ENCODE measurements at regions of chr2 and their contacts with region 1.

Region 1: DNA sequence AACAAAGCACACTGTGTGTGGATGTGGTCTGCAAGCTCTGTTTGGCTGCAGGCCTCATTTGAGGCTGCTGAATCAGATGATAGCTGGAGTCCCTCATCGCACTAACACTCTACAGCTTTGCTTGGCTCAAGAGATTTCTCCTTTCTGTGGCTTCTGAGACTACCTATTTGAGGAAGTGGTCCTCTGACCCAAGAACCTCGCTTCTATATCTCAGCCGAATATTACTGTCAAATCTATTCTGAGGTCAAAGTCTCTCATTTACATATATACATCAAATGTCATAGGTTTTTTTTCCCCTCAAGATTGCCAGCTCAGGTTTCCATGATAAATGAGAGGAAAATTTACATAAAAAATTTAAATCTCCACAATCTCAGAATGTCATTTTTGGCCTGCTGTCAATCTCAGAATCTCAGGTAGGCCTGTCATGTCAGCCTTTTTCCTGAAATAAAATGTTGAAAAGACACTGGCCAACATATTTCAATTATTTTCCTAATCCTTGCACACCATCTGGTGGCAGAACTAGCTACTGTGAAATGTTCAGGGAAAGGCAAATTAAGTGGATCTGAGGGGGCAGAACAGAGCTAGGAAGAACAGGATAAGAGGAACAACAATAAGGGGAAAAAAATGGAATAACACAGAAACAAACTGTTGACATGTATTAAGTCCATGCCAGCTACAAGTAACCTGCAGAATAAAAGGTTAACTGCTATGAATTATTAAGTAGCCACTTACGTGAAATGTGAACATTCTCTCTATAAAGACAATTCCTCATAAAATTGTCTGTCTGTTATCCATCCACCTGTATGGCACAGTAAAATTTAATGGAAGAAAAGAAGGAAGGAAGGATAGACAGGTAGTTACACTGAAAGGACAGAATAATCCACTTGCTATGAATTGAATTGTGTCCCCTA is 39.3 kb downstream of the AP1S3 start:
- DNase-seq: peak; percentile 59
- ATAC-seq: peak; percentile 73
- H3K4me3 ChIP-seq: no peak overlapping the region
- H3K27ac ChIP-seq: no peak overlapping the region
- H3K4me1 ChIP-seq: peaks cover 8% of the 10 kb centered on the region
- H3K27me3 ChIP-seq: no peaks in the 10 kb centered on the region
- CTCF ChIP-seq: peak; percentile 83
- POLR2A ChIP-seq: no peak
- RAD21 ChIP-seq: peak; percentile 85

Region 2: DNA sequence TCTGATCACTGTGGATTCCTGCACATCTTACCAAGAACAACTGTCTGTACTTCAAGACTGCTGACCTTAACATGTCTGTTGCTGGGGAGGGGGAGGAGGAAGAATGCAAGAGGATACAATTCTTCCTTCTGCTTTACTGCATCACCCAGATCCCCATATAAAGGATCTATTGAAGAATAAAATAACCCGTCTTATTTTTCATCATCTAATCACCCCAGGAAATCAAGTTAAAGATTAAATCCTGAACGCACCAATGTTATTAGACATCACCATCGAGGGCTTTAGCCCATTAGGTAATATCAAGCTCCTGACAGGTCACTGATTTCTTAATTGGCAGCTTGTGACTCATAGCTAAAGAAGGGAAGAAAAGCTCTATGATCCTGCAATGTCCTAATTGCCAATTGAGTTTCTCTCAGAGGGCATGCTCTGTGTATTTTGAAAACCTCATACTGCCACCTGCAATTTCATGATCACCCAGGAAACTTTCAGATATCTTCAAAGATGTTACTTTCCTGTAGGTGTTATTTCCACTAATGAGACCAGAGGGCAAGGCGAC is 821.5 kb before region 1 on chr2:
- CTCF ChIA-PET with region 1: interaction called, 7 read pairs
- POLR2A ChIA-PET with region 1: no interaction called
- dilution Hi-C with region 1: no loop called
- in situ Hi-C with region 1: loop called (anchors 10 kb)
- intact Hi-C with region 1: loop called (anchors 2 kb)
- DNase-seq: no peak
- ATAC-seq: no peak
- H3K4me3 ChIP-seq: no peak overlapping the region
- H3K27ac ChIP-seq: no peak overlapping the region
- H3K4me1 ChIP-seq: peaks cover 3% of the 10 kb centered on the region; the same call in 1 of the 2 replicates
- H3K27me3 ChIP-seq: no peaks in the 10 kb centered on the region
- CTCF ChIP-seq: no peak
- POLR2A ChIP-seq: no peak
- RAD21 ChIP-seq: no peak

Region 3: GRCh38 chr2:223247136-223247535 is 550.9 kb before region 1 on chr2:
- CTCF ChIA-PET with region 1: interaction called, 5 read pairs
- POLR2A ChIA-PET with region 1: no interaction called
- dilution Hi-C with region 1: no loop called
- in situ Hi-C with region 1: no loop called
- intact Hi-C with region 1: loop called (anchors 1 kb)
- DNase-seq: peak; percentile 43
- ATAC-seq: peak; percentile 77
- H3K4me3 ChIP-seq: no peak overlapping the region
- H3K27ac ChIP-seq: no peak overlapping the region
- H3K4me1 ChIP-seq: no peaks in the 10 kb centered on the region
- H3K27me3 ChIP-seq: no peaks in the 10 kb centered on the region
- CTCF ChIP-seq: peak; percentile 63
- POLR2A ChIP-seq: no peak
- RAD21 ChIP-seq: peak; percentile 68

Region 4: GRCh38 chr2:223459328-223459939 is 338.6 kb before region 1 on chr2:
- CTCF ChIA-PET with region 1: no interaction called
- POLR2A ChIA-PET with region 1: no interaction called
- dilution Hi-C with region 1: no loop called
- in situ Hi-C with region 1: no loop called
- intact Hi-C with region 1: loop called (anchors 1 kb)
- DNase-seq: peak; percentile 44
- ATAC-seq: no peak
- H3K4me3 ChIP-seq: no peak overlapping the region
- H3K27ac ChIP-seq: no peak overlapping the region
- H3K4me1 ChIP-seq: peaks cover 3% of the 10 kb centered on the region
- H3K27me3 ChIP-seq: no peaks in the 10 kb centered on the region
- CTCF ChIP-seq: peak; percentile 53
- POLR2A ChIP-seq: no peak
- RAD21 ChIP-seq: peak; percentile 43

Region 5: GRCh38 chr2:223674998-223675609 is 123.0 kb before region 1 on chr2:
- CTCF ChIA-PET with region 1: interaction called, 7 read pairs
- POLR2A ChIA-PET with region 1: no interaction called
- dilution Hi-C with region 1: no loop called
- in situ Hi-C with region 1: no loop called
- intact Hi-C with region 1: loop called (anchors 1 kb)
- DNase-seq: peak; percentile 54
- ATAC-seq: peak; percentile 80
- H3K4me3 ChIP-seq: no peak overlapping the region
- H3K27ac ChIP-seq: no peak overlapping the region
- H3K4me1 ChIP-seq: no peaks in the 10 kb centered on the region
- H3K27me3 ChIP-seq: no peaks in the 10 kb centered on the region
- CTCF ChIP-seq: peak; percentile 71
- POLR2A ChIP-seq: no peak
- RAD21 ChIP-seq: peak; percentile 63

Region 6: DNA sequence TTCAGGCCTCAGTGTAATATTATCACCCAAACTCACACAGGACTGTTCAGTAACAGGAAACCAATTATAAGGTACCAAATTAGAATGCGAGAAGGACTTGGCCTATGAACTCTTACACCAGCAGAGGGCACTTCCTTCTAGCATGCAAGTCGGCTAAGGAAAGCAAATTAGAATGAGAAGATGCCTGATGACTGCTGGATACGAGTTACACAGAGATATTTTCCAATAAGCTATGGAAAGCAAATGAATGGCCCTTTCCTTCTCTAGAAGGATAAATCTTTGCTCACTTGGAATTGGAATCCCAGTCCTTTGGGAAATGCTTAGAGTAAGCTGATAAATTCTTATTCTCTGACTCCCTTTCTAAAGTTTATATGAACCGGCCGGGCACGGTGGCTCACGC is 70.5 kb before region 1 on chr2:
- CTCF ChIA-PET with region 1: no interaction called
- POLR2A ChIA-PET with region 1: no interaction called
- dilution Hi-C with region 1: no loop called
- in situ Hi-C with region 1: no loop called
- intact Hi-C with region 1: loop called (anchors 2 kb)
- DNase-seq: peak; percentile 75
- ATAC-seq: peak; percentile 35
- H3K4me3 ChIP-seq: no peak overlapping the region
- H3K27ac ChIP-seq: peak overlapping the region; percentile 30; the same call in 1 of the 2 replicates
- H3K4me1 ChIP-seq: peaks cover 18% of the 10 kb centered on the region
- H3K27me3 ChIP-seq: no peaks in the 10 kb centered on the region
- CTCF ChIP-seq: peak; percentile 49
- POLR2A ChIP-seq: no peak
- RAD21 ChIP-seq: peak; percentile 42; the same call in 1 of the 2 replicates

Region 7: GRCh38 chr2:223854741-223855140 is 56.7 kb after region 1 on chr2:
- CTCF ChIA-PET with region 1: no interaction called
- POLR2A ChIA-PET with region 1: no interaction called
- dilution Hi-C with region 1: no loop called
- in situ Hi-C with region 1: no loop called
- intact Hi-C with region 1: no loop called
- DNase-seq: no peak
- ATAC-seq: no peak
- H3K4me3 ChIP-seq: no peak overlapping the region
- H3K27ac ChIP-seq: no peak overlapping the region
- H3K4me1 ChIP-seq: peaks cover 6% of the 10 kb centered on the region
- H3K27me3 ChIP-seq: no peaks in the 10 kb centered on the region
- CTCF ChIP-seq: no peak
- POLR2A ChIP-seq: no peak
- RAD21 ChIP-seq: no peak